Mammary epithelial cell (primary cell): ENCODE measurements at regions of chr3 and their contacts with region 1.

Region 1: DNA sequence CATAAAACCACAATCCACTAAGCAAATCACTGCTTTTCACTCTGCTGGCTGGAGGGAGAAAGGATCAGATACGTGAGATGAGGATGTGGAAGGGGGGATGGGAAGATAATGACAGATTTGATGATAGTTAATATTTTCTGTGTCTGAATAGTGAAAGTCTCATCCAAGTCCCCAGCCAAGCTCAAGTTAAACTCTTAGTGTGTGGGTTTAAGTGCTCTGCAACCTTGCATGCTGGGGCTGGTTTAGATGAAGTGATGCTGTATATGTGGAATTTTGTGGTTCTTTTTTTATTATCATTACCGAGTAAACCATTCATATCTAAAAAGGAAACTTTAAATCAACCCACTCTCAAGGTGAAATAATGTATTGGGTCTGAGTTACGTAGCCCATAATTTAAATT is 111.0 kb downstream of the TPRG1 start:
- DNase-seq: peak; percentile 85
- H3K4me3 ChIP-seq: peak overlapping the region in 2 of 3 experiments; percentile 21 to 39
- H3K27ac ChIP-seq: peak overlapping the region; percentile 92
- H3K4me1 ChIP-seq: peaks cover 26% of the 10 kb centered on the region
- H3K27me3 ChIP-seq: no peaks in the 10 kb centered on the region
- CTCF ChIP-seq: no peak

Region 2: GRCh38 chr3:189324538-189325138 is 41.9 kb after region 1 on chr3:
- CTCF ChIA-PET with region 1: no interaction called
- dilution Hi-C with region 1: no loop called
- in situ Hi-C with region 1: no loop called
- intact Hi-C with region 1: loop called (anchors 2 kb)
- DNase-seq: peak; percentile 99
- H3K4me3 ChIP-seq: no peak overlapping the region
- H3K27ac ChIP-seq: peak overlapping the region; percentile 48
- H3K4me1 ChIP-seq: peaks cover 40% of the 10 kb centered on the region
- H3K27me3 ChIP-seq: no peaks in the 10 kb centered on the region
- CTCF ChIP-seq: no peak